H1 (cell line): ENCODE measurements at regions of chr2 and their contacts with region 1.

Region 1: GRCh38 chr2:64144057-64145013 is at the start of gene PELI1:
- DNase-seq: peak; percentile 96 to 98
- H3K4me3 ChIP-seq: peak within 1 kb of the TSS; percentile 62 to 94 (median 80)
- H3K27ac ChIP-seq: peak within 1 kb of the TSS; percentile 89
- H3K4me1 ChIP-seq: peaks cover 0 to 8% (median 2%) of the 10 kb centered on the region in 4 experiments; a peak in 2 of 7 replicates
- H3K27me3 ChIP-seq: no peaks in the 10 kb centered on the region
- CTCF ChIP-seq: 0 out of 4 replicates have a peak, but pooled peaks of 1 of the 3 experiments have one; percentile 6
- EP300 ChIP-seq: no peak
- POLR2A ChIP-seq: peak; percentile 81 to 94
- RAD21 ChIP-seq: peak in 1 of 2 experiments; percentile 37; a peak in 2 of 4 replicates
- total RNA-seq, gene PELI1: 57.1 and 57.2 TPM in 2 replicates

Region 2: GRCh38 chr2:63849381-63850203 is 294.7 kb before region 1 on chr2:
- CTCF ChIA-PET with region 1: no interaction called
- POLR2A ChIA-PET with region 1: no interaction called
- DNase-seq: peak in 1 of 2 experiments; percentile 58
- H3K4me3 ChIP-seq: peak overlapping the region in 3 of 4 experiments; percentile 14 to 60 (median 33); a peak in 5 of 8 replicates
- H3K27ac ChIP-seq: peak overlapping the region; percentile 76
- H3K4me1 ChIP-seq: peaks cover 18 to 60% (median 26%) of the 10 kb centered on the region in 4 experiments
- H3K27me3 ChIP-seq: no peaks in the 10 kb centered on the region
- CTCF ChIP-seq: no peak
- EP300 ChIP-seq: no peak
- POLR2A ChIP-seq: peak; percentile 25 to 79
- RAD21 ChIP-seq: no peak; a peak in 1 of 4 replicates

Region 3: GRCh38 chr2:64133828-64134227 is 10.5 kb before region 1 on chr2:
- CTCF ChIA-PET with region 1: interaction called, 3 read pairs
- POLR2A ChIA-PET with region 1: interaction called, 35 read pairs
- DNase-seq: no peak
- H3K4me3 ChIP-seq: no peak overlapping the region
- H3K27ac ChIP-seq: no peak overlapping the region
- H3K4me1 ChIP-seq: peaks cover 0 to 10% (median 0%) of the 10 kb centered on the region in 4 experiments; a peak in 3 of 7 replicates
- H3K27me3 ChIP-seq: peaks cover 0 to 1% (median 0%) of the 10 kb centered on the region in 4 experiments; a peak in 1 of 7 replicates
- CTCF ChIP-seq: no peak
- EP300 ChIP-seq: no peak
- POLR2A ChIP-seq: no peak
- RAD21 ChIP-seq: no peak